ENCODE measurements at regions of chr14 and their contacts with region 1.

Region 1: GRCh38 chr14:103808403-103809001 is 38.9 kb downstream of the PPP1R13B start:
- DNase-seq: peak; percentile 90
- H3K4me3 ChIP-seq: no peak overlapping the region
- H3K27ac ChIP-seq: no peak overlapping the region
- H3K4me1 ChIP-seq: 0 out of 2 replicates have a peak, but pooled peaks cover 7% of the 10 kb centered on the region
- H3K27me3 ChIP-seq: no peaks in the 10 kb centered on the region

Region 2: GRCh38 chr14:102840756-102841528 is 967.6 kb before region 1 on chr14:
- in situ Hi-C with region 1: no loop called
- DNase-seq: no peak
- H3K4me3 ChIP-seq: no peak overlapping the region
- H3K27ac ChIP-seq: no peak overlapping the region
- H3K4me1 ChIP-seq: no peaks in the 10 kb centered on the region
- H3K27me3 ChIP-seq: no peaks in the 10 kb centered on the region

Region 3: GRCh38 chr14:103408491-103409155 is 399.9 kb before region 1 on chr14:
- in situ Hi-C with region 1: no loop called
- DNase-seq: no peak
- H3K4me3 ChIP-seq: no peak overlapping the region
- H3K27ac ChIP-seq: no peak overlapping the region
- H3K4me1 ChIP-seq: peaks cover 16% of the 10 kb centered on the region
- H3K27me3 ChIP-seq: no peaks in the 10 kb centered on the region

Region 4: DNA sequence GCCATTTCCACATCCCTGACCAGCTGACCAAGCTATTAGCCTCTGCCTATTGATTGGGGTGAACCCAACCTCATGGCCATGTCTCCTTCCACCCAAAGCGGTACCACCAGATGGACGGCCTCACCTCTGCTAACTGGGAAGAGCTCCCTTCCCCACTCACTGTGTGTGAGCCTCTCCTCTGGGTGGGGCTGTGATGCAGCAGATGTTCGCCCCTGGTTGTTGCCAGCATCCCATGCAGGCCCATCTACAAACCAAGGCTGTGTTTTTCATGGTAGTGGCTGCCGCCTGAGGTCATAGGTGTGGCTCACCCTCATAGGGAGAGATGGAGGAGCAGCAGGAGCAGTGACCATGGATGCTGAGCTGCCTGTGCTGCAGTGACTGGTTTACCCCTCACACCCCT is 181.5 kb after region 1 on chr14:
- in situ Hi-C with region 1: loop called (anchors 10 kb)
- DNase-seq: no peak
- H3K4me3 ChIP-seq: no peak overlapping the region
- H3K27ac ChIP-seq: no peak overlapping the region
- H3K4me1 ChIP-seq: no peaks in the 10 kb centered on the region; the same call in 1 of the 2 replicates
- H3K27me3 ChIP-seq: peaks cover 34% of the 10 kb centered on the region

Measured in GM23248 (cell line).